ENCODE measurements at regions of chr2 and their contacts with region 1.

Region 1: DNA sequence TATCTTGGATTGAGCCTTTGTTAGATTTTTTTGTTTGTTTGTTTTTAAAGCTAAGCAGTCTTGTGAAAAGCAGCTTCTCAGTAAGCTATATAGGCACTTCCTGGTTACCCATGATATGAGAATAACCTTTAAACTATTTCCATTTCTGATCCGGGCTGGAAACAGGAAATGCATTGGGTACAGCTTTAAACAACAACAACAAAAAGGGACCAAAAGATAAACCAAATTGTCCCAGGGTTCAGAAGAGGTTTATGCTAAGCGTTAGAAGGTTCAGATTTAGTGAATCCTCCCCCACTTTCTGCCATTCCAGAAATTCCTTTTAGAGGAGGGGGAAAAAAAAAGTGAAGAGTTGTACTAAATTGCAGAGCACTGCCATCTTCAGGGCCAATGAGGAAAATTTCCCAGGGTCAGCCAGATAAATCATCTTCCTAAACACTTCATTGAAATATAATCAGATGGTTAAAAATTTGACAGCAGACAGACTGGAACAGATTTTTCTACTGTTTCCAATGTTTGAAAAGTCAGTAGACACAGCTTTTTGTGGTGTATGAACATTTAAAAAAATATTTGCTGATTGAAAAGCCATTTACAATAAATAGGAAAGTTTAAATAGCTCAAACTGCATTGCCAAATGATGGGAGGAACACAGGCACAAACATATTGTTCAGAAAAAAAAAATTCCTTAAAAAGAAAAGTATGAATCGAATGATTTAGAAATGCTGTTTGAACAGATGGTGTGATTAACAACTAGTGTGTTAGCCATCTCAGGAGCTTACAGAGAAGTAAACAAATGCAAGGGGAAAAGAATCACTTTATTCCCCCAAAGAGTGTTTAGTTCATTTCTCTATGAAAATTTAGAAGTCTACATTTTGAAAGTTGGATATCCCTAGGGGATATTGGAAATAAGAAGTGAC is 189.9 kb upstream of the TANK start:
- DNase-seq: no peak
- H3K4me3 Mint-ChIP-seq: no peak overlapping the region
- H3K27ac Mint-ChIP-seq: no peak overlapping the region
- H3K4me1 Mint-ChIP-seq: no peaks in the 10 kb centered on the region
- H3K27me3 Mint-ChIP-seq: peaks cover 10% of the 10 kb centered on the region

Region 2: DNA sequence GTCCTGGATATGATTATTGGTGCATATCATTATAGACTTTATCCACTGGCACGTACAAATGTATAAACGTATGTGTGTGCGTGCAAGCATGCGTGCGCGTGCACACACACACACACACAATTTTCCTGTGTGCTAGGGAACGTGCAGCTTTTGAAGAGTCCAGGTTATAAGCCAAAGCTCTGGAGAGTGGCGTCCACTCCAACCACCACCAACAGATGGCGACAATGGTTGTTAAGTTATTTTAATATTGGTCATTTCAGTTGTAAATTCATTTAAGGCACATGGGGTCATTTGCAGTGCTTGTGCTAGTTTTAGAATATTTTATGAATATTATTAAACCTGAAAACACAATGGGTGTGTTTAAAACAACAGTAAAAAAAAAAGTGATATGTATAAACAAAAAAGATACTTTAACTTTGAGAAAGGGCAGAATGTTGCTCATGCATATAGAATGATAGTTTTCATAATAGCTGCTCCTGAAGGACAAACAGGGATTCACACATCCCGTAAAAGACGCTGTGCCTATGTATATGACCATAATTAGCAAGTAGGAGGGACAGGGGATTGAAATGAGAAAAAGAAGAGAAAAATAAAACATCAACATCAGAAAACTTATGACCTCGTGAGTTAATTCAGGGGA is 646.0 kb before region 1 on chr2:
- CTCF ChIA-PET with region 1: interaction called, 11 read pairs
- POLR2A ChIA-PET with region 1: no interaction called
- DNase-seq: peak; percentile 49
- H3K4me3 Mint-ChIP-seq: no peak overlapping the region
- H3K27ac Mint-ChIP-seq: no peak overlapping the region
- H3K4me1 Mint-ChIP-seq: peaks cover 50% of the 10 kb centered on the region
- H3K27me3 Mint-ChIP-seq: peaks cover 4% of the 10 kb centered on the region

Region 3: GRCh38 chr2:161352719-161353118 is 382.4 kb after region 1 on chr2:
- CTCF ChIA-PET with region 1: no interaction called
- POLR2A ChIA-PET with region 1: no interaction called
- DNase-seq: no peak
- H3K4me3 Mint-ChIP-seq: no peak overlapping the region
- H3K27ac Mint-ChIP-seq: no peak overlapping the region
- H3K4me1 Mint-ChIP-seq: peaks cover 2% of the 10 kb centered on the region
- H3K27me3 Mint-ChIP-seq: no peaks in the 10 kb centered on the region

Region 4: DNA sequence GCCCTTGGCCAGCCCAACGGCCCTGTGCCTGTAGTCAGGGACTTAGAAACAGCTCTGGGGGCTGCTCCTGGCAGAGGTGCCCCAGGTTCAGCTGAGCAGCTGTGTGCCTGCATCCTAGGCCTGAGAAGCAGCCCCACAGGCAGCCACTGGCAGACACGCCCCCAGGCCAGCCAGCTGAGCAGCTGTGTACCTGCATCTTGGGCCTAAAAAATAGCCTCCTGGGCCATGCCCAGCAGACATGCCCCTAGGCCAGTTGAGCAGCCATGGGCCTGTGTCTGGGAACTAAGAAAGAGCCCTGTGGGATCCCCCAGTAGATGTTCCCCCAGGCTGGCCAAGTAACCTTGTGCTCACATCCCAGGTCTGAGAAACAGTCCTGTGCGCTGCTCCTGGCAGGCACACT is 509.8 kb after region 1 on chr2:
- CTCF ChIA-PET with region 1: no interaction called
- POLR2A ChIA-PET with region 1: no interaction called
- DNase-seq: no peak
- H3K4me3 Mint-ChIP-seq: no peak overlapping the region
- H3K27ac Mint-ChIP-seq: no peak overlapping the region
- H3K4me1 Mint-ChIP-seq: no peaks in the 10 kb centered on the region
- H3K27me3 Mint-ChIP-seq: peaks cover 9% of the 10 kb centered on the region